Mammary epithelial cell (primary cell): ENCODE measurements at regions of chr10 and their contacts with region 1.

Region 1: GRCh38 chr10:52004342-52004949 is 305.1 kb upstream of the CSTF2T start:
- DNase-seq: peak; percentile 16
- H3K4me3 ChIP-seq: no peak overlapping the region
- H3K27ac ChIP-seq: no peak overlapping the region
- H3K4me1 ChIP-seq: no peaks in the 10 kb centered on the region
- H3K27me3 ChIP-seq: no peaks in the 10 kb centered on the region
- CTCF ChIP-seq: peak; percentile 61 to 70

Region 2: DNA sequence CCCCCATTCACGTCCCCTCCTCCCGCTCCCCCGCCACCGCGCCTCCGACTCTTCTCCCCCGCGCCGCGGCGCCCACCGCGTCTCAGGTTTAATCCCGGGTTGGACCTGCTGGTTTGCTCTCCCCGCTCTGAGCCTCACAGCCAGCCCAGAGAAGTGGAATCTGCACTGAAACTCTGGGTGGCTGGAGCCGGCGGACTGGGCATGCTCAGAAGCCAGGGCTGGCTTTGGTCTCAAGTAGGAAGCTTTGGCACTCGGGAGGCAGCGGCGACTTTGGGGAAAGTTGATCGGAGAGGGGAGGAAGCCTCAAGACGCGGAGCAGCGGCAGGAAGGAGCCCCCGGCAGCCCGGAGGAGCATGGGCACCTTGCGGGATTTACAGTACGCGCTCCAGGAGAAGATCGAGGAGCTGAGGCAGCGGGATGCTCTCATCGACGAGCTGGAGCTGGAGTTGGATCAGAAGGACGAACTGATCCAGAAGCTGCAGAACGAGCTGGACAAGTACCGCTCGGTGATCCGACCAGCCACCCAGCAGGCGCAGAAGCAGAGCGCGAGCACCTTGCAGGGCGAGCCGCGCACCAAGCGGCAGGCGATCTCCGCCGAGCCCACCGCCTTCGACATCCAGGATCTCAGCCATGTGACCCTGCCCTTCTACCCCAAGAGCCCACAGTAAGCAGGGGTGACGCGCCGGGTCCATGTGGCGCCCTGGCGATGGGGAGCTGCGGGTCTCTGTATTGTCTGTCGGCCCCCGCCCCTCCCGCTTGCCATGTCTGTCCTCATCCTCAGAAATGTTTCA is 930.0 kb before region 1 on chr10 and contains the start of gene PRKG1:
- CTCF ChIA-PET with region 1: no interaction called
- dilution Hi-C with region 1: no loop called
- in situ Hi-C with region 1: loop called in 1 of 2 experiments (anchors 25 kb)
- intact Hi-C with region 1: no loop called
- DNase-seq: peak; percentile 52
- H3K4me3 ChIP-seq: peak within 1 kb of the TSS; percentile 47 to 58 (median 52)
- H3K27ac ChIP-seq: no peak within 1 kb of the TSS
- H3K4me1 ChIP-seq: peaks cover 11% of the 10 kb centered on the region
- H3K27me3 ChIP-seq: peaks cover 22% of the 10 kb centered on the region
- CTCF ChIP-seq: no peak
- total RNA-seq, gene PRKG1: 0.45 to 2.2 TPM

Region 3: GRCh38 chr10:52050429-52051047 is 46.1 kb after region 1 on chr10:
- CTCF ChIA-PET with region 1: no interaction called
- dilution Hi-C with region 1: no loop called
- in situ Hi-C with region 1: no loop called
- intact Hi-C with region 1: no loop called
- DNase-seq: no peak
- H3K4me3 ChIP-seq: no peak overlapping the region
- H3K27ac ChIP-seq: no peak overlapping the region
- H3K4me1 ChIP-seq: no peaks in the 10 kb centered on the region
- H3K27me3 ChIP-seq: no peaks in the 10 kb centered on the region
- CTCF ChIP-seq: no peak

Region 4: DNA sequence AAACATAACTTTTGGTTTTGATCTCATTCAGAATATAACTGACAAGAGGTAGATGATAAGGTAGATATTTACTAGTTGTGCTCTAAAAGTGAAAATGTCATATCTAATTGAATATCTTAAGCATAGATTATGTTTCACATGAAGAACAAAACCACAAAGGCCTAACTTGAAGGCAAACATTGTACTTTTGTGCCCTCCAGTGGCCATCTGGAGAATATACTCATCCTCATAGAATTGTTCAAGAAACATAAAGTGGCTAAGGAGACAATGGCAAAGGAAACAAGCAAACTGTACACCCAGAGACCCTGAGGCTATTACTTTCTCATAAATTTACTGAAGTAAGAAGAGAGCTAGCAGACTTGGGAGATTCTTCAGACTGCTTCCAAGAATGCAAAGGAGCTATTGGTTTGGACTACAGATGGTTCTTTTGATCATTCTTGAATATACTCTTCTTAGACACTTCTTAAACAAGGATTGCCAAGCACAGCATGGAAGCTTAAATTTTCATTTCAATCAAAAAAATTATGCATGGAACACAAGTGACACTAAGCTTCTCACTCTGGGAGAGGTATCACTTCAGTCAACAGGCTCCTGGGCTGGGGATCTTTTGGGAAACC is 211.4 kb after region 1 on chr10:
- CTCF ChIA-PET with region 1: no interaction called
- dilution Hi-C with region 1: no loop called
- in situ Hi-C with region 1: no loop called
- intact Hi-C with region 1: loop called (anchors 10 kb)
- DNase-seq: peak; percentile 57
- H3K4me3 ChIP-seq: no peak overlapping the region
- H3K27ac ChIP-seq: no peak overlapping the region
- H3K4me1 ChIP-seq: no peaks in the 10 kb centered on the region
- H3K27me3 ChIP-seq: no peaks in the 10 kb centered on the region
- CTCF ChIP-seq: peak; percentile 66 to 68